ENCODE measurements at regions of chr17 and their contacts with region 1.

Region 1: GRCh38 chr17:64025732-64026294 is 5.4 kb upstream of the ICAM2 start:
- DNase-seq: no peak
- H3K4me3 ChIP-seq: peak overlapping the region; percentile 20
- CTCF ChIP-seq: peak; percentile 90

Region 2: GRCh38 chr17:63311416-63311937 is 714.3 kb before region 1 on chr17:
- CTCF ChIA-PET with region 1: no interaction called
- POLR2A ChIA-PET with region 1: no interaction called
- DNase-seq: no peak
- H3K4me3 ChIP-seq: no peak overlapping the region
- CTCF ChIP-seq: no peak

Region 3: GRCh38 chr17:63549946-63550807 is 475.6 kb before region 1 on chr17 and contains the start of gene DCAF7:
- CTCF ChIA-PET with region 1: no interaction called
- POLR2A ChIA-PET with region 1: no interaction called
- DNase-seq: peak; percentile 99
- H3K4me3 ChIP-seq: peak within 1 kb of the TSS; percentile 85
- CTCF ChIP-seq: no peak

Region 4: DNA sequence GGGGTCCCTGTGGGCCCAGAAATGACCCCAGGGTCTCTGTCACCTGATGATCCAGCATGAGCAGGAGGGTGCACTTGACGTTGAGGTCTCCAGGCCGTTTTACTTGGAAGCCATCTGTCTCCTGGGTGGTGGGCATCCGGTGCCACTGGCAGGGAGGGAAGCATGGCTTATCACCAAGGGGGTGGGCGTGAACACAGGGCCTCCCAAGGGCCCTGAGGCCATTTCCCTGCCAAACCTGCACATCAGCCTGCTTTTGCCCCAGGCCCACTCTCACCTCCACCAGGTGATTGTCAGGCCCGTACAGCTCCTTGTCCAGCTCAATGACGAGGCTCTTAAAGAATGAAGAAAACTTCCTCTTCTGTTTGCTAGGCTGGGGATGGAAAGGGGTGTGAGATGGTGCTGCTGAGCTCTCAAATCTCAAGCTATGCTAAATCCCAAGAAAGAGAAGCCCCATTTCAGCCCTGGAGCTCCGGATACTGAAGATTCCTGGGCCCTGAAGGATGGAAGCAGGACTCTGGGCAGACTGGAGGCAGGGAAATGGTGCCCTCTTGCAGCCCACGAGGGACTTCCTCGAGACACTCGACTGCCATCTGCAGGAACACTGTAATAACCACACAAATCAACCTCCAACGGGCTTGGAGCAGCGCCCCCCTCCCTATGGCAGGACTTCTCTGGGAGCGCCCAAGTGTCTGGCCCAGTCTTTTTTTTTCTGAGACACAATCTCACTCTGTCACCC is 191.2 kb before region 1 on chr17:
- CTCF ChIA-PET with region 1: no interaction called
- POLR2A ChIA-PET with region 1: no interaction called
- DNase-seq: no peak
- H3K4me3 ChIP-seq: no peak overlapping the region
- CTCF ChIP-seq: peak; percentile 76

Region 5: DNA sequence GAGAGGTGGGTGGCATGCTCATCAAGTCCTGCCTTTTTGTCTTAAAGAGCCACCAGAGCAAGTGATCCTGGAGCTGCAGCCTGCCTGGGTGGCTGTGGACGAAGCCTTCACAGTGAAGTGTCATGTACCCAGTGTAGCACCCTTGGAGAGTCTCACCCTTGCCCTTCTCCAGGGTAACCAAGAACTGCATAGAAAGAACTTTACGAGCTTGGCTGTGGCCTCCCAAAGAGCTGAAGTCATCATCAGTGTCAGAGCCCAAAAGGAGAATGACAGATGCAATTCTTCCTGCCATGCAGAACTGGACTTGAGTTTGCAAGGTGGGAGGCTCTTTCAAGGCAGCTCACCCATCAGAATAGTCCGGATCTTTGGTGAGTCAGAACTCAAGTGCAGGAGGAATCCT is 166.6 kb before region 1 on chr17:
- CTCF ChIA-PET with region 1: no interaction called
- POLR2A ChIA-PET with region 1: no interaction called
- DNase-seq: no peak
- H3K4me3 ChIP-seq: no peak overlapping the region
- CTCF ChIP-seq: no peak

Region 6: DNA sequence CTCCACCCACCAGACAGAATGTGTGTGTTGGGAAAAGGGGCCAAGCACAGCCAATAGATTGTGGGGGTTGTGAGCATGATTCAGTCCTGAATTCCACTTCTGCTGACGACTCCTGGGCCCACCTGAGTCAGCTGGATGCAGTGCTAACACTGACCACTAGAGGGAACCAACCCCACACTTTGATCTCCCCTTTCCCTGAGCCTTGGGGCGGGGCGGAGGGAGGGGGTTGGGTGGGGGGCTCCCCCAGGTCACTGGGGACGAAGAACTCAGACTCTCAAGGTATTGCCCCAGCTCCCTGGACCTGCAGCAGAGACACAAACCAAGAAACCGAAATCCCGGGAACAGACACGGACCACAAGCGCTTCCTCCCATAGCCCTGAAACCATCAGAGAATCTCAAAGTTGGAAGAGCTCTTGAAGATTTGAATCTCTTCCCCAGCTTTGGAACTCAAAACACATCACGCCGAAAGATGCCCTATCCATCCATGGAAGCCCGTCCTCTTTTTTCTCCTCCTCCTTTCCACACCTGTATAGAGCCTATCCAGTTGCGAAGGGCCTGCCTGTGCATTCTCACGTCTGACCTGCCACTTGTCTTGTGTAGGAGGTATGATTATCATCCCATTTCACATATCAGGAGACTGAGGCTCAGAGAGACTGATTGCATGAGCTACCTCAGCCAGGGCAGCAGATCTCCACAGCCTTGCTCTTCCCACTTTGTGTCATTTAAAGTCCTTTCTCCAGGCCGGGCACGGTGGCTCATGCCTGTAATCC is 114.0 kb before region 1 on chr17:
- CTCF ChIA-PET with region 1: interaction called, 79 read pairs
- POLR2A ChIA-PET with region 1: no interaction called
- DNase-seq: no peak
- H3K4me3 ChIP-seq: no peak overlapping the region
- CTCF ChIP-seq: peak; percentile 79

Region 7: GRCh38 chr17:63974594-63975192 is 51.1 kb before region 1 on chr17:
- CTCF ChIA-PET with region 1: interaction called, 11 read pairs
- POLR2A ChIA-PET with region 1: no interaction called
- DNase-seq: no peak
- H3K4me3 ChIP-seq: no peak overlapping the region
- CTCF ChIP-seq: no peak

Region 8: GRCh38 chr17:64036198-64036922 is 10.5 kb after region 1 on chr17:
- CTCF ChIA-PET with region 1: interaction called, 224 read pairs
- POLR2A ChIA-PET with region 1: no interaction called
- DNase-seq: no peak
- H3K4me3 ChIP-seq: no peak overlapping the region
- CTCF ChIP-seq: no peak

Region 9: GRCh38 chr17:64081802-64082799 is 56.3 kb after region 1 on chr17:
- CTCF ChIA-PET with region 1: interaction called, 10 read pairs
- POLR2A ChIA-PET with region 1: no interaction called
- DNase-seq: no peak
- H3K4me3 ChIP-seq: no peak overlapping the region
- CTCF ChIP-seq: no peak

Region 10: GRCh38 chr17:64281962-64282727 is 256.3 kb after region 1 on chr17:
- CTCF ChIA-PET with region 1: interaction called, 67 read pairs
- POLR2A ChIA-PET with region 1: no interaction called
- DNase-seq: no peak
- H3K4me3 ChIP-seq: no peak overlapping the region
- CTCF ChIP-seq: peak; percentile 62

Measured in AG04449 (cell line).